Natural killer cell (primary cell): ENCODE measurements at regions of chr12 and their contacts with region 1.

Region 1: GRCh38 chr12:122054842-122055520 is 23.6 kb upstream of the MLXIP start:
- DNase-seq: no peak
- ATAC-seq: no peak
- H3K4me3 ChIP-seq: no peak overlapping the region
- H3K4me3 Mint-ChIP-seq: no peak overlapping the region
- H3K27ac ChIP-seq: no peak overlapping the region
- H3K27ac Mint-ChIP-seq: no peak overlapping the region
- H3K4me1 ChIP-seq: peaks cover 7% of the 10 kb centered on the region
- H3K4me1 Mint-ChIP-seq: peaks cover 0 to 7% of the 10 kb centered on the region in 2 donors
- H3K27me3 ChIP-seq: no peaks in the 10 kb centered on the region
- H3K27me3 Mint-ChIP-seq: no peaks in the 10 kb centered on the region
- CTCF ChIP-seq: no peak

Region 2: DNA sequence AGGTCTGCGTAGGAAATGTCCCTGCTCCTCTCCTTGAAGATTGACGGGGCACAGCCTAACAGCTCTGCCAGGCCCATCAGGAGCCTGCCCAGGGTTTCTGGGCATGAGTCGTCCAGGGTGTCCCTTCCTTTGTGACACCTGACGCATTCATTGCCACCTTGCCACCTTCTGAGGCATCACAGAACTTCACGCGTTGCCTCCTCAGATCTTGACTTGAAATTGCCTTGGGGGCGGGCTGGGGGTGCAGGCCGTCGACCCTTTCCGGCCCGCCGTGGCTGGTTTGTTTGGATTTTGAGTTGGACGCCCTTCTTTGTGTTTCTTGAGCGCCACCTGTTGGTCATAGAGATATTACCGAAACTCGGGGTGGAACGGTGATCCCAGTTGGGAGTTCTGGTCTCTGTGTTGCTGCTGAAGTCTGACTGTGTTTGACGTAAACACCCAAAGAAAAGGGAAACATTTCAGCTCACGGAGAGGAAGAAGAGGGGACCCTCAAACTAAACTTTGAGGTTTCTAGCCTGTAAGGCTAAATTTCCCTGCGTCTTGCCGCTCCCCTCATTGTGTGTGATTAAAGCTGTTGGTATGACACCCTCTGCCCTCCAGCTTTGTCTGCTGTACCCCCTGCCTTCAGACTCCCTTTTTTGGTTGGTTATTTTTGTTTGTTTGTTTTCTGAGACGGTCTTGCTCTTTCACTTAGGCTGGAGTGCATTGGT is 68.2 kb after region 1 on chr12:
- intact Hi-C with region 1: loop called (anchors 1 kb)
- DNase-seq: peak; percentile 53 to 86
- ATAC-seq: peak; percentile 66 to 73 (median 71)
- H3K4me3 ChIP-seq: no peak overlapping the region
- H3K4me3 Mint-ChIP-seq: peak overlapping the region; percentile 49
- H3K27ac ChIP-seq: no peak overlapping the region
- H3K27ac Mint-ChIP-seq: peak overlapping the region; percentile 41 to 45
- H3K4me1 ChIP-seq: peaks cover 28% of the 10 kb centered on the region
- H3K4me1 Mint-ChIP-seq: peaks cover 23 to 30% of the 10 kb centered on the region in 2 donors
- H3K27me3 ChIP-seq: no peaks in the 10 kb centered on the region
- H3K27me3 Mint-ChIP-seq: no peaks in the 10 kb centered on the region
- CTCF ChIP-seq: peak; percentile 77

Region 3: GRCh38 chr12:122190842-122191668 is 136.1 kb after region 1 on chr12:
- intact Hi-C with region 1: loop called (anchors 1 kb)
- DNase-seq: peak; percentile 68 to 79
- ATAC-seq: peak; percentile 90 to 99 (median 95)
- H3K4me3 ChIP-seq: no peak overlapping the region
- H3K4me3 Mint-ChIP-seq: no peak overlapping the region
- H3K27ac ChIP-seq: no peak overlapping the region
- H3K27ac Mint-ChIP-seq: no peak overlapping the region
- H3K4me1 ChIP-seq: peaks cover 3% of the 10 kb centered on the region
- H3K4me1 Mint-ChIP-seq: peaks cover 5 to 8% of the 10 kb centered on the region in 2 donors
- H3K27me3 ChIP-seq: no peaks in the 10 kb centered on the region
- H3K27me3 Mint-ChIP-seq: no peaks in the 10 kb centered on the region
- CTCF ChIP-seq: peak; percentile 77

Region 4: DNA sequence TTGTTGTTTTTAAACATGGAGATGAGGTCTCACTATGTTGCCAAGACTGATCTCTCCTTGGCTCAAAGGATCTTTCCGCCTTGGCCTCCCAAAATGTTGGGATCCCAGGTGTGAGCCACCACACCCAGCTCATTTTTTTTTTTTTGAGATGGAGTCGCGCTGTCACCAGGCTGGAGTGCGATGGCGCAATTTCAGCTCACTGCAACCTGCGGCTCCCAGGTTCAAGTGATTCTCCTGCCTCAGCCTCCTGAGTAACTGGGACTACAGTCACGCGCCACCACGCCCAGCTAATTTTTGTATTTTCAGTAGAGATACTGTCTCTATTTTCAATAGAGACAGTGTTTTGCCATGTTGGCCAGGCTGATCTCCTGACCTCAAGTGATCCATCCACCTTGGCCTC is 372.4 kb after region 1 on chr12:
- intact Hi-C with region 1: no loop called
- DNase-seq: no peak
- ATAC-seq: no peak
- H3K4me3 ChIP-seq: no peak overlapping the region
- H3K4me3 Mint-ChIP-seq: no peak overlapping the region
- H3K27ac ChIP-seq: no peak overlapping the region
- H3K27ac Mint-ChIP-seq: no peak overlapping the region
- H3K4me1 ChIP-seq: peaks cover 10% of the 10 kb centered on the region
- H3K4me1 Mint-ChIP-seq: peaks cover 0 to 12% of the 10 kb centered on the region in 2 donors
- H3K27me3 ChIP-seq: no peaks in the 10 kb centered on the region
- H3K27me3 Mint-ChIP-seq: no peaks in the 10 kb centered on the region
- CTCF ChIP-seq: no peak